ENCODE measurements at regions of chr5 and their contacts with region 1.

Region 1: DNA sequence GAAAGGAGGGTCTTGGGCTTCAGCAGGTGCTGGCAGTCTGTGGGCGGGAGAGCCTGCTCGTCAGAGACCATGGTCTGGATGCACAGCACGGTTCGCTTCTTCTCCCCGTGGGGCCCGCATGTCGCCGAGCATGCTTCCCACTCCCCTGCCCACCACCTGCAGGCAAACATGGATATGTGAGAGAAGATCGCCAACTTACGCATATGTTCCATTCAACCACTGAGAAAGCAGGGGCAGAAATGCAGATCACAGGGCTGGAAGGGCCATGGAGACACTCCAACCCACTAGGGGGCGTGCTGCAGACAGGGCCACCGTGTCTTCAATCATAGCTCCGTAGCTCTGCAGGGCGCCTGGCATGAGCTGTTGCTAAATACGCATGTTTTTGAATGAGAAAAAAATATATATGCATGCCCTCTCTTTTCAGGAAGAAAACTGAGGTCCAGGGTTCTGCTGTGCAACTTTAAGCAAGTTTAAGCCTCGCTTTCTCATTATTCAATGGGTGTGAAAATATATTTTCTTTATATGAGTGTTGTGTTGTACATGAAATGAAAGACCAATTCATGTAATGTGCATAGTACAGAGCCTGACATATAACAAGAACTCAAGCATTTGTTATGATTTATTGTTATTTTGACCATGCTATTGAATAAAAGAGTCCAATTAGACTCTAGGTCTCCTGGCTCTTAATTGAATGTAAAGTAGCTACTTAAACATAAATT is 148.0 kb downstream of the TARS1 start:
- DNase-seq: peak; percentile 51 to 89
- H3K4me3 ChIP-seq: no peak overlapping the region
- H3K27ac ChIP-seq: no peak overlapping the region
- H3K4me1 ChIP-seq: peaks cover 0 to 3% (median 0%) of the 10 kb centered on the region in 4 experiments; a peak in 2 of 7 replicates
- H3K27me3 ChIP-seq: no peaks in the 10 kb centered on the region
- CTCF ChIP-seq: peak; percentile 85 to 99 (median 98)
- EP300 ChIP-seq: no peak
- POLR2A ChIP-seq: no peak
- RAD21 ChIP-seq: peak; percentile 79 to 87

Region 2: GRCh38 chr5:33509036-33509435 is 79.8 kb before region 1 on chr5:
- CTCF ChIA-PET with region 1: no interaction called
- POLR2A ChIA-PET with region 1: no interaction called
- DNase-seq: no peak
- H3K4me3 ChIP-seq: no peak overlapping the region
- H3K27ac ChIP-seq: no peak overlapping the region
- H3K4me1 ChIP-seq: no peaks in the 10 kb centered on the region
- H3K27me3 ChIP-seq: no peaks in the 10 kb centered on the region
- CTCF ChIP-seq: no peak
- EP300 ChIP-seq: no peak
- POLR2A ChIP-seq: no peak
- RAD21 ChIP-seq: no peak

Region 3: GRCh38 chr5:33576726-33577590 is 11.9 kb before region 1 on chr5:
- CTCF ChIA-PET with region 1: interaction called, 69 read pairs
- POLR2A ChIA-PET with region 1: no interaction called
- DNase-seq: no peak
- H3K4me3 ChIP-seq: no peak overlapping the region
- H3K27ac ChIP-seq: no peak overlapping the region
- H3K4me1 ChIP-seq: no peaks in the 10 kb centered on the region
- H3K27me3 ChIP-seq: no peaks in the 10 kb centered on the region
- CTCF ChIP-seq: no peak
- EP300 ChIP-seq: no peak
- POLR2A ChIP-seq: no peak
- RAD21 ChIP-seq: no peak

Region 4: DNA sequence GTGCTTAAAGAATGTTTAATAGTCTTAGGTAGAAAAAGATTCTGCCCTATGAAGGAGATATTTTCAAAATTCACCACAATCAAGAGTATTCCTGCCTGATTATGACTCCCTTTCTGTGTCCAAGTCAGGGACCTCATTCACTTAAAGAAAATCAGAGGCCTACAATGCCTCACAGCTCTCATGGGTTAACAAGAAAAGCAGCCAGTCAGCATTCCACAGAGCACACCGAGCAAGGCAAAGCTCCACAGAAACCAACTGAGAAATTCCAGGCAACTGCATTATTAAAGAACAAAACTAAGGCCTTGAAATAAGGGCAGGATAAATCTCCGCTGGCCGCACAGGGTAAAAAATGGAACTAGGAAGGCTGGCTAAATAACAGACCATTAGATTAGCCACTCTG is 13.1 kb after region 1 on chr5:
- CTCF ChIA-PET with region 1: interaction called, 55 read pairs
- POLR2A ChIA-PET with region 1: interaction called, 4 read pairs
- DNase-seq: no peak
- H3K4me3 ChIP-seq: no peak overlapping the region
- H3K27ac ChIP-seq: no peak overlapping the region
- H3K4me1 ChIP-seq: no peaks in the 10 kb centered on the region
- H3K27me3 ChIP-seq: no peaks in the 10 kb centered on the region
- CTCF ChIP-seq: no peak
- EP300 ChIP-seq: no peak
- POLR2A ChIP-seq: no peak
- RAD21 ChIP-seq: no peak

Region 5: GRCh38 chr5:33628796-33629195 is 40.0 kb after region 1 on chr5:
- CTCF ChIA-PET with region 1: no interaction called
- POLR2A ChIA-PET with region 1: no interaction called
- DNase-seq: no peak
- H3K4me3 ChIP-seq: no peak overlapping the region
- H3K27ac ChIP-seq: no peak overlapping the region
- H3K4me1 ChIP-seq: no peaks in the 10 kb centered on the region; a peak in 1 of 7 replicates
- H3K27me3 ChIP-seq: no peaks in the 10 kb centered on the region
- CTCF ChIP-seq: no peak
- EP300 ChIP-seq: no peak
- POLR2A ChIP-seq: no peak
- RAD21 ChIP-seq: no peak

Region 6: DNA sequence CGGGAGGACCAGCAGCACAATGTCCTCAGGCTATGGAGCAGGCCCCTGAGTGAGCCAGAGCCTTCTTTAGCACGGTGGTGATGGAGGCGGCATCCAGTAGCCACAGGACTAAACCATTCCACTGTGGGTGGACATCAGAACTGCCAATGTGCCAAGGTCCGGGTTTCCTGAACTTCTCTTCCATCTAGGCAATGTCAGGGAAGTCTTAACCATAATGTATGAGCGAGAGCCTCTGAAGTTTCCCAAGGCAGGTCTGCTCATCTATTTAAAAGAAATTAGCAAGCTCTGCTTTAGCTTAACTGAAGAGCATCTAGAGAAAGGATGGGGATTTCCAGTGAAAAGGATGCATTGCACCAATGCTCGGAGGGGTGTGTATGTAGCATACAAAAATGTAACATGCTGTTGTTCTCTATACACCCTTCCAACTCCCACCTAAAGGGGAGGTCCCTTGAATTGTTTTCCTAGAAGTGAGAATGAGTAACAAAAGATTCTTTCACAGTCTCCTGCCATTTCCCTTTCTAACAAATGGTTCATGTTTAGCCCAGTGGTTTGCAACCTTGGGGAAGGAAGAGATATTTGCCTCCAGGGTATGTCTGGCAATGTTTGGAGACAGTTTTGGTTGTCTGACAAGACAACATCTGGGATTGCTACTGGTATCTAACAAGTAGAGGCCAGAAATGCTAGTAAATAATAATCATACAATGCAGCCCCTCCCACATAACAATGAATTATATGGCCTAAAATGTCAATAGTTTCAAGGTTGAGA is 341.3 kb after region 1 on chr5:
- CTCF ChIA-PET with region 1: interaction called, 44 read pairs
- POLR2A ChIA-PET with region 1: no interaction called
- DNase-seq: no peak
- H3K4me3 ChIP-seq: no peak overlapping the region
- H3K27ac ChIP-seq: no peak overlapping the region
- H3K4me1 ChIP-seq: peaks cover 2 to 15% (median 10%) of the 10 kb centered on the region in 4 experiments; a peak in 5 of 7 replicates
- H3K27me3 ChIP-seq: no peaks in the 10 kb centered on the region
- CTCF ChIP-seq: no peak
- EP300 ChIP-seq: no peak
- POLR2A ChIP-seq: no peak
- RAD21 ChIP-seq: no peak

Region 7: DNA sequence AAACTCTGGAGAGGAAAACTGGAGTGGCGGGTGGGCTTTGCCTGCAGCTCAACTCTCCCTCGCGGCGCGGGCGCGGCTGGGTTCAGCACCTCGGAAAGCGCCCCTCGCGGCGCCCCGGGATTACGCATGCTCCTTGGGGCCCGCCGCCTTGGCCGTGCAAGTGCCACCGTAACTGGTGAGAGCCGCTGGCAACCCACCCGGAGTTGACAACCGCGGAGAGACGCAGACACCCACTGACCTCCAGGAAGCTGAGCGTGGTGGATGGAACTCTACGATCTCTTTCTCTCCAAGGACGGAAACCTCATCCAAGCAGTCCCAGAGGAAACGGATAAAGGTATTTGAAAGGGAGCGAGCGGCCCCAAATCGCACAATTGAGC is 347.2 kb after region 1 on chr5:
- CTCF ChIA-PET with region 1: interaction called, 44 read pairs
- POLR2A ChIA-PET with region 1: no interaction called
- DNase-seq: peak in 1 of 2 experiments; percentile 94
- H3K4me3 ChIP-seq: peak overlapping the region; percentile 45 to 71 (median 66)
- H3K27ac ChIP-seq: no peak overlapping the region
- H3K4me1 ChIP-seq: peaks cover 2 to 5% (median 3%) of the 10 kb centered on the region in 4 experiments; a peak in 5 of 7 replicates
- H3K27me3 ChIP-seq: peaks cover 0 to 17% (median 13%) of the 10 kb centered on the region in 4 experiments; a peak in 5 of 7 replicates
- CTCF ChIP-seq: peak in 1 of 3 experiments; percentile 21; a peak in 1 of 4 replicates
- EP300 ChIP-seq: no peak
- POLR2A ChIP-seq: no peak
- RAD21 ChIP-seq: peak; percentile 21 to 39; a peak in 1 of 4 replicates